ENCODE measurements at regions of chr3 and their contacts with region 1.

Region 1: DNA sequence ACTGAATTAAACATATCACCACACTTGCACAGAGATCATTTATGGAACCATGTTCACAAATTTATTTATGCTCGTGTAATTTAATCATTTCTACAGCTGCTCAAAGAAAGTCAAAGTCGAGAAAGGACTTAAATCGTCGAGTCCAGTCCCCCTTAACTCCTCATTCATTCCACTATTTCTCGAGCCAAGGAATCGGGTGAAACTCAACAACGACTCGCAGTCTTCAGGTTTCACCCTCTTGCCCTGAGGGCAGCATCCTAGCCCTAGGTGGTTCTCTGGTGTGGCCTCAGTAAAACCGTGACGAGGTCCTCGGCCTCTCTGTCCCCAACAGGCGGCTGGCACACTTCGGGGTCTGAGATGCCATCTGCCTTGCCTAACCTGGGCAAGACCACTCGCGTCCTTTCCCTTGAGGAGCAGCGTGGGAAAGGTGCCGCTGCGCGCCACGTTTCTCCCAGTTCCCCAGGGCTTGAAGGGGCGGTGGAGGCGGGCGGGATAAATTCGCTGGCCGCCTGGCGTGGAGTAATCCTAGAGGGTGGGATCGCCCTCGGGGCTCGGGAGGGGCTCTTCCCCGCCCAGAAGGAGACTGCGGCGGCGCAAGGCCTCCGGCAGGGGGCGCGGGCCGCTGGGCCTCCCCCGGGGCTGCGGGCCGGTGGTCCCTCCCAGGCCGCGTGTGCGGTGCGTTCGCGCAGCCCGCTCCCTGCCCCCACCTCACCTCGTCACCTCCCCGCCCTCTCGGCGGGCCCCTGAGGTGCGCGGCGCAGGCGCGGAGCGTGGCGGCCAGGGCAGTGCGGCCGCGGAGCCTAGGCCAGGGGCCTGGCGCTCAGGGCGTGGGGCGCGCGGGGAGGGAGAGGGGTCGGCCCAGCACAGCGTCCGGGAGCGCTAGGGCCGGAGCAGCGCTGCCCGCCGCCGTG is at the start of gene ZNF639:
- DNase-seq: peak; percentile 87 to 94
- ATAC-seq: peak; percentile 94
- H3K4me3 ChIP-seq: peak within 1 kb of the TSS; percentile 30 to 74
- H3K27ac ChIP-seq: peak within 1 kb of the TSS; percentile 59 to 83
- H3K4me1 ChIP-seq: no peaks in the 10 kb centered on the region
- H3K27me3 ChIP-seq: no peaks in the 10 kb centered on the region
- total RNA-seq, gene ZNF639: 36.9 to 40.0 TPM

Region 2: DNA sequence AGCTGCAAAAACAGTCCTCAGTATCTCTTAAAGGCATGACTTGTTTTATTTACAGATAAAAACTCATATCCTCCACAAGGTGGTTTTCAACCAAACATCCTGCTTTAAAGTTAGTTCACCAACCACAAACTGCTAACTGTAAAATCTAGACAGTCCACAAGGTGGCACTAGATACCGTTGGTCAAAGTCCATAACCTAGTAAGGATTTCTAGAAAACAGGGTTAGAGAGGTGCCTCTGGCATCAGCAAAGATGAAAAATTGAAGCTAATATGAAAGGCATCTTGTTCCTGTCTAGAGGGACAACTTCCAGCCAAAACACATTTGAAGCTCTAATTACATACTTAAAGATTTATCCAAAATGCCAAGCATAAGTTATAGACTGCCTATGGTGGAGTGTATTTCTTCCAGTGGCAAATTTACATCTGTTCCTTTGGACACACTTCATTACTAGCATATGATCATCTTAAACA is 307.0 kb before region 1 on chr3:
- intact Hi-C with region 1: loop called in 1 of 2 experiments (anchors 2 kb)
- DNase-seq: no peak
- ATAC-seq: peak; percentile 92
- H3K4me3 ChIP-seq: no peak overlapping the region
- H3K27ac ChIP-seq: no peak overlapping the region
- H3K4me1 ChIP-seq: peaks cover 0 to 2% of the 10 kb centered on the region in 2 donors
- H3K27me3 ChIP-seq: no peaks in the 10 kb centered on the region

Region 3: DNA sequence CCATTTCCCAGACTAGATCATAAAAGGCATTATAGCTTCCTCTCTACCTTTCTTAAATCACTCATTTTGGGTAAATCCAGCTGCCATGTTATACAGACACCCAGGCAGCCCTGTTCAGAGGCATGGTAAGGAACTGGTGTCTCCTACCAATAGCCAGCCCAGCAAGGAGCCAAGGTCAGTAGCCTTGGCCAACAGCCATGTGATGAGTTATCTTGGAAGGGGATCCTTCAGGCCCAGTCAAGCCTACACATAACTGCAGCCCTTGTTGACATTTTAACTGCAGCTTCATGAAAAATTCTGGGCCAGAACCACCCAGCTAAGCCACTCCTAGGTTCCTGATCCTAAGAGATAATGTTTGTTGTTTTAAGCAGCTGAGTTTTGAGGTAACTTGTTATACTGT is 221.9 kb before region 1 on chr3:
- intact Hi-C with region 1: loop called (anchors 5 kb)
- DNase-seq: no peak
- ATAC-seq: no peak
- H3K4me3 ChIP-seq: no peak overlapping the region
- H3K27ac ChIP-seq: no peak overlapping the region
- H3K4me1 ChIP-seq: no peaks in the 10 kb centered on the region
- H3K27me3 ChIP-seq: no peaks in the 10 kb centered on the region

Region 4: GRCh38 chr3:179108086-179108485 is 214.5 kb before region 1 on chr3:
- intact Hi-C with region 1: loop called (anchors 5 kb)
- DNase-seq: no peak
- ATAC-seq: no peak
- H3K4me3 ChIP-seq: no peak overlapping the region
- H3K27ac ChIP-seq: no peak overlapping the region
- H3K4me1 ChIP-seq: no peaks in the 10 kb centered on the region
- H3K27me3 ChIP-seq: no peaks in the 10 kb centered on the region

Region 5: GRCh38 chr3:179181021-179181472 is 141.5 kb before region 1 on chr3:
- intact Hi-C with region 1: no loop called
- DNase-seq: no peak
- ATAC-seq: peak; percentile 90
- H3K4me3 ChIP-seq: no peak overlapping the region
- H3K27ac ChIP-seq: no peak overlapping the region
- H3K4me1 ChIP-seq: peaks cover 5 to 16% of the 10 kb centered on the region in 2 donors
- H3K27me3 ChIP-seq: no peaks in the 10 kb centered on the region

Region 6: DNA sequence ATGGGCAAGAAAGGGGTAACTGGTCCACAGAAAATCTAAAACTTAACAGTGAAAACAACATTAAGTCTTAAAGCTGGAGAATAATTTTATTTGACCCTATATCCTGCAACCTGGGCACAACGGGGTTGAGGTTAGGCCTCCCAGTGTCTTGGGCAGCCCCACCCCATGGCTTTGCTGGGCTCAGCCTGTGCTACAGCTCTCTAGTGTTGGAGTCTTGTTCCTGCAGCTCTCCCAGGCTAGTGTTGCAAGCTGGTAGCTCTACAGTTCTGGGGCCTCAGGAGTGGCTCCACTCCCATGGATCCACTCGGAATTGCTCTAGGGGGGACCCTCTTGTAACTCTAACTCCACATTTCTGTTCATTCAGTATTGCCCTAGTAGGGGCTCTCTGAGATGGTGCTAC is 153.7 kb after region 1 on chr3:
- intact Hi-C with region 1: no loop called
- DNase-seq: no peak
- ATAC-seq: no peak
- H3K4me3 ChIP-seq: no peak overlapping the region
- H3K27ac ChIP-seq: no peak overlapping the region
- H3K4me1 ChIP-seq: no peaks in the 10 kb centered on the region
- H3K27me3 ChIP-seq: no peaks in the 10 kb centered on the region

Region 7: GRCh38 chr3:180163719-180164118 is 841.2 kb after region 1 on chr3:
- intact Hi-C with region 1: no loop called
- DNase-seq: no peak
- ATAC-seq: no peak
- H3K4me3 ChIP-seq: no peak overlapping the region
- H3K27ac ChIP-seq: no peak overlapping the region
- H3K4me1 ChIP-seq: no peaks in the 10 kb centered on the region
- H3K27me3 ChIP-seq: no peaks in the 10 kb centered on the region

Measured in aorta (tissue), 5 donors.